ENCODE measurements at regions of chr5 and their contacts with region 1.

Region 1: GRCh38 chr5:133801955-133802751 is 166.3 kb downstream of the C5orf15 start:
- DNase-seq: no peak
- ATAC-seq: no peak
- H3K4me3 ChIP-seq: no peak overlapping the region
- H3K27ac ChIP-seq: no peak overlapping the region
- H3K4me1 ChIP-seq: no peaks in the 10 kb centered on the region
- H3K27me3 ChIP-seq: peaks cover 6% of the 10 kb centered on the region
- CTCF ChIP-seq: no peak

Region 2: GRCh38 chr5:134370871-134371833 is 569.0 kb after region 1 on chr5 and contains the start of gene UBE2B:
- CTCF ChIA-PET with region 1: no interaction called
- POLR2A ChIA-PET with region 1: interaction called, 15 read pairs
- in situ Hi-C with region 1: no loop called
- intact Hi-C with region 1: no loop called
- DNase-seq: peak; percentile 98
- ATAC-seq: peak; percentile 89
- H3K4me3 ChIP-seq: peak within 1 kb of the TSS; percentile 81 to 98
- H3K27ac ChIP-seq: peak within 1 kb of the TSS; percentile 96
- H3K4me1 ChIP-seq: peaks cover 12% of the 10 kb centered on the region
- H3K27me3 ChIP-seq: no peaks in the 10 kb centered on the region
- CTCF ChIP-seq: no peak
- total RNA-seq, gene UBE2B: 97.8 TPM

Measured in Panc1 (cell line).